CD8-positive, alpha-beta T cell (primary cell): ENCODE measurements at regions of chr11 and their contacts with region 1.

Region 1: DNA sequence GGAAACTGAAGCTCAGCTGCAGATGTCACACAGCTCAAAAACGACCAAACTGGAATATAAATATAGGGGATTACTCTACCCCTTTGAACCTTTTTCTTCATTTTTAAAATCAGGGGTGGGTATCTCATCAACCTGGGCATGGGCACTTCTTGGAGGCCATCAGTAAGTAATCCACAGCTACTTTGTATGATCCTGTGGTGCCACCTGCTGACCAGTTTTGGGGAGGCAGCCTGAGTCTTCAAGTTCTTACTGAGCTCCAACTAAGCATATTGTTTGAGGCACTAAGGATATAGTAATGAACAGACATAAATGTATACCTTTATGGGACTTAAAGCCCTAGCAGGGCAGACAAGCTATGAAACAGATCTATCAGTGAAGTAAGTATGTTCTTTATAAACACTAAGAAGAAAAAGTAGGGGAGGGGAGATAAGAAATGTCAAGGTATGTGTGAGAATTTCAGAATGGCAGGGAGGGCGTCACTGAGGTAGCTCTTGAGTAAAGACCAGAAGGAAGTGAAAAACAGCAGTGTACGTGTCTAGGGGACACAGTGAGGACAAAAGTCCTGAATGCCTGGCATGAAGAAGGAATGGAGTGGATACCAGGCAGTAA is 18.4 kb downstream of the TUB start:
- DNase-seq: peak; percentile 47 to 78 (median 66)
- ATAC-seq: peak; percentile 54
- H3K4me3 ChIP-seq: no peak overlapping the region
- H3K4me3 Mint-ChIP-seq: no peak overlapping the region
- H3K27ac ChIP-seq: no peak overlapping the region
- H3K27ac Mint-ChIP-seq: no peak overlapping the region
- H3K4me1 ChIP-seq: no peaks in the 10 kb centered on the region
- H3K4me1 Mint-ChIP-seq: no peaks in the 10 kb centered on the region
- H3K27me3 ChIP-seq: no peaks in the 10 kb centered on the region
- H3K27me3 Mint-ChIP-seq: no peaks in the 10 kb centered on the region
- CTCF ChIP-seq: peak; percentile 62

Region 2: GRCh38 chr11:7098235-7098832 is 1001.1 kb before region 1 on chr11:
- CTCF ChIA-PET with region 1: no interaction called
- POLR2A ChIA-PET with region 1: no interaction called
- intact Hi-C with region 1: loop called in 1 of 2 experiments (anchors 1 kb)
- DNase-seq: peak in 2 of 9 experiments; percentile 53 to 69
- ATAC-seq: no peak
- H3K4me3 ChIP-seq: no peak overlapping the region
- H3K4me3 Mint-ChIP-seq: no peak overlapping the region
- H3K27ac ChIP-seq: no peak overlapping the region
- H3K27ac Mint-ChIP-seq: no peak overlapping the region
- H3K4me1 ChIP-seq: no peaks in the 10 kb centered on the region
- H3K4me1 Mint-ChIP-seq: no peaks in the 10 kb centered on the region
- H3K27me3 ChIP-seq: no peaks in the 10 kb centered on the region
- H3K27me3 Mint-ChIP-seq: peaks cover 11% of the 10 kb centered on the region
- CTCF ChIP-seq: peak; percentile 63

Region 3: GRCh38 chr11:7892840-7893254 is 206.5 kb before region 1 on chr11:
- CTCF ChIA-PET with region 1: interaction called, 39 read pairs
- POLR2A ChIA-PET with region 1: no interaction called
- intact Hi-C with region 1: loop called in 1 of 2 experiments (anchors 1 kb)
- DNase-seq: peak in 2 of 9 experiments; percentile 39 to 61
- ATAC-seq: peak; percentile 70
- H3K4me3 ChIP-seq: no peak overlapping the region
- H3K4me3 Mint-ChIP-seq: no peak overlapping the region
- H3K27ac ChIP-seq: no peak overlapping the region
- H3K27ac Mint-ChIP-seq: no peak overlapping the region
- H3K4me1 ChIP-seq: no peaks in the 10 kb centered on the region
- H3K4me1 Mint-ChIP-seq: peaks cover 5% of the 10 kb centered on the region
- H3K27me3 ChIP-seq: no peaks in the 10 kb centered on the region
- H3K27me3 Mint-ChIP-seq: peaks cover 3% of the 10 kb centered on the region
- CTCF ChIP-seq: peak; percentile 56

Region 4: DNA sequence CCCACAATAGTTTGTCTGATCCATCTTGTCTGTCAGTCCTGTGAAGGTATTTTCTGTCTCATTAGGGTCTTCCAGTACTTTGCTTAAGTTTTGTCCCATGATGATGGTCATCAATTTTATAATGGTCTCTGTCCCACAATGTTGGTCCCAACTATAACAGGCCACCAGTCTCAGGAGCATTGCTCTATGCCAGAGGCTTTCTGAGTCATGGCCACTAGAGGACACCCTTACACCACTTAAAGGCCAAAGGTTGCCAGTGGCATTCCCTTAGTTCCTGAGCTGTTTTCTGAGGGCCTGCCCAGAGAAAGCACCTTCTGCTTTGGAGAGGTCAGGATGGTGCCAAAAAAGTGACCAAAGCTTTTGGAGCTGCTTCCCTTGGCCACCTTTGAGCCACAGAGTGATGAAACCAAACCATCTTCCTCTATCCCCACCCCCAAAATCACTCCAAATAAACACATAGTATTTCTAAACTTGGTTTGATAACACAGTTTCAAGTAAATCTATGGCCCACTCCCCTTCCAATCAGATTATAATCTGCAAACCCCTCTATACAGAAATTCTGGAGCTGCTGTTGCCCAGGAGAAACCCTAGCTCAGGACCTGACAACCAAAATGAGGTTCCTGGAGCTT is 92.9 kb before region 1 on chr11:
- CTCF ChIA-PET with region 1: interaction called, 92 read pairs
- POLR2A ChIA-PET with region 1: no interaction called
- intact Hi-C with region 1: loop called (anchors 1 kb)
- DNase-seq: peak in 8 of 9 experiments; percentile 14 to 68 (median 44)
- ATAC-seq: peak; percentile 49
- H3K4me3 ChIP-seq: no peak overlapping the region
- H3K4me3 Mint-ChIP-seq: no peak overlapping the region
- H3K27ac ChIP-seq: no peak overlapping the region
- H3K27ac Mint-ChIP-seq: no peak overlapping the region
- H3K4me1 ChIP-seq: no peaks in the 10 kb centered on the region
- H3K4me1 Mint-ChIP-seq: no peaks in the 10 kb centered on the region
- H3K27me3 ChIP-seq: peaks cover 0 to 2% of the 10 kb centered on the region in 2 experiments
- H3K27me3 Mint-ChIP-seq: peaks cover 14% of the 10 kb centered on the region
- CTCF ChIP-seq: peak; percentile 49

Region 5: GRCh38 chr11:8033305-8034105 is 65.9 kb before region 1 on chr11:
- CTCF ChIA-PET with region 1: interaction called, 109 read pairs
- POLR2A ChIA-PET with region 1: interaction called, 3 read pairs
- intact Hi-C with region 1: loop called in 1 of 2 experiments (anchors 1 kb)
- DNase-seq: peak in 7 of 9 experiments; percentile 27 to 68 (median 49)
- ATAC-seq: peak; percentile 85
- H3K4me3 ChIP-seq: no peak overlapping the region
- H3K4me3 Mint-ChIP-seq: no peak overlapping the region
- H3K27ac ChIP-seq: no peak overlapping the region
- H3K27ac Mint-ChIP-seq: no peak overlapping the region
- H3K4me1 ChIP-seq: peaks cover 8% of the 10 kb centered on the region
- H3K4me1 Mint-ChIP-seq: peaks cover 6% of the 10 kb centered on the region
- H3K27me3 ChIP-seq: peaks cover 3 to 7% of the 10 kb centered on the region in 2 experiments
- H3K27me3 Mint-ChIP-seq: peaks cover 30% of the 10 kb centered on the region
- CTCF ChIP-seq: peak; percentile 61

Region 6: GRCh38 chr11:8081591-8082250 is 17.7 kb before region 1 on chr11:
- CTCF ChIA-PET with region 1: interaction called, 12 read pairs
- POLR2A ChIA-PET with region 1: no interaction called
- intact Hi-C with region 1: no loop called
- DNase-seq: no peak
- ATAC-seq: no peak
- H3K4me3 ChIP-seq: no peak overlapping the region
- H3K4me3 Mint-ChIP-seq: peak overlapping the region; percentile 52
- H3K27ac ChIP-seq: no peak overlapping the region
- H3K27ac Mint-ChIP-seq: no peak overlapping the region
- H3K4me1 ChIP-seq: peaks cover 9% of the 10 kb centered on the region
- H3K4me1 Mint-ChIP-seq: peaks cover 8% of the 10 kb centered on the region
- H3K27me3 ChIP-seq: peaks cover 7 to 10% of the 10 kb centered on the region in 2 experiments
- H3K27me3 Mint-ChIP-seq: peaks cover 60% of the 10 kb centered on the region
- CTCF ChIP-seq: no peak

Region 7: GRCh38 chr11:8111636-8112035 is 12.2 kb after region 1 on chr11:
- CTCF ChIA-PET with region 1: interaction called, 21 read pairs
- POLR2A ChIA-PET with region 1: no interaction called
- intact Hi-C with region 1: no loop called
- DNase-seq: no peak
- ATAC-seq: no peak
- H3K4me3 ChIP-seq: no peak overlapping the region
- H3K4me3 Mint-ChIP-seq: no peak overlapping the region
- H3K27ac ChIP-seq: no peak overlapping the region
- H3K27ac Mint-ChIP-seq: no peak overlapping the region
- H3K4me1 ChIP-seq: no peaks in the 10 kb centered on the region
- H3K4me1 Mint-ChIP-seq: no peaks in the 10 kb centered on the region
- H3K27me3 ChIP-seq: peaks cover 0 to 2% of the 10 kb centered on the region in 2 experiments
- H3K27me3 Mint-ChIP-seq: peaks cover 4% of the 10 kb centered on the region
- CTCF ChIP-seq: no peak